ENCODE measurements at regions of chr21 and their contacts with region 1.

Region 1: DNA sequence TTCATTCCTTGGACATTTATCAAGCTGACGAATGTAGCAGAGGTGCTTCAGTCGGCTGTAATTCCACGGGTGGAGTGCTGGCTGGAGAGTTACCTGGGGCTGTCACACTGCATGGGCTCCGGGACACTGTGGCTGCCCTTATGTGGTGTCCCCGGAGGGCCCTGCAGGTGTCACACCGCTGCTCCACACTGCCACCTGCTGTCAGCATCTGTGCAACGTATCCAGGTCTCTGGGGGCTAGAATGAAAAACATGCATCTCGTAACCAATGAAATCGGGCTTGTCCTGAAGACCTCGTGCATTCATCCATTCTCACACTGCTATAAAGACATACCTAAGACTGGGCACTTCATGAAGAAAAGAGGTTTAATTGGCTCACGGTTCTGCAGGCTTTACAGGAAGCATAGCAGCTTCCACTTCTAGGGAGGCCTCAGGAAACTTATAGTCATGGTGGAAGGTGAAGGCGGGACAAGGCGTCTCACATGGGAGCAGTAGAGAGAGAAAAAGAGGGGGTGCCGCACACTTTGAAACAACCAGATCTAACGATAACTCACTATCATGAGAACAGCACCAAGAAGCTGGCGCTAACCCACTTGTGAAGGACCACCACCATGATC is 46.7 kb upstream of the PCBP3 start:
- DNase-seq: peak; percentile 90
- H3K4me3 Mint-ChIP-seq: no peak overlapping the region
- H3K27ac Mint-ChIP-seq: no peak overlapping the region
- H3K4me1 Mint-ChIP-seq: peaks cover 13% of the 10 kb centered on the region
- H3K27me3 Mint-ChIP-seq: peaks cover 4% of the 10 kb centered on the region

Region 2: DNA sequence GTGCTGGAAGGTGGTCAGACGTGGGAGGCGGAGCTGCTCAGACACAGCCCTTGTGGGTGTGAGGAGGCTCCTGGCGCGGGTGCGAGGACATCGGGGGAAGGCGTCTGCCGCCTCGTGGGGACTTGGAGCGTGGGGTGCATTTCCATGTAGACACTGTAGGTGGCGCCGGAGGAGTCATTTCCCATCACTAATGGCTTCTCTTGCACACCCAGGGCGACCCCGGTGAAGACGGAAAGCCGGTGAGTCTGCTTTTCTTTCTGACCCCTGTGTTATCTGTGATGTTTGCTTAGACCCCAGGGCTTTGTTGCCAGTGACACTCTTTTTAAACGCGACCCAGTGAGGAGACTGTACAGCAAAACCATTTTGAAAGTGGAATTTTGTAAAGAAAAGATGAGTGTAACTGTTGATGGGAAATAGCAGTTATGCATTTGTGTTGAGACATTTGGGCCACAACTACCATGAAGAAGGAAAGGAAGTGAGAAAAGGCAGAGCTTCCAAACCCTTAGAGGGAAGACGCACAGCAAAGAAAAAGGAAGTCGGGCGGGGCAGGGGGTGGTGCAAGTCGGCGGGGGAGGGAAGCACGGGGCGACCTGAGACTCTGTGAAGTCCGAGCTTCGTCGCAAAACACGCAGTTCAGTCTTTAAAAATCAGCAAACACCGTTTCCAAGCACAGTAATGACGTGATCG is 118.6 kb before region 1 on chr21:
- CTCF ChIA-PET with region 1: interaction called, 10 read pairs
- DNase-seq: peak; percentile 86
- H3K4me3 Mint-ChIP-seq: peak overlapping the region; percentile 59
- H3K27ac Mint-ChIP-seq: peak overlapping the region; percentile 88
- H3K4me1 Mint-ChIP-seq: peaks cover 41% of the 10 kb centered on the region
- H3K27me3 Mint-ChIP-seq: no peaks in the 10 kb centered on the region

Region 3: GRCh38 chr21:45555551-45556301 is 41.1 kb before region 1 on chr21:
- CTCF ChIA-PET with region 1: interaction called, 16 read pairs
- DNase-seq: peak; percentile 44
- H3K4me3 Mint-ChIP-seq: no peak overlapping the region
- H3K27ac Mint-ChIP-seq: no peak overlapping the region
- H3K4me1 Mint-ChIP-seq: peaks cover 27% of the 10 kb centered on the region
- H3K27me3 Mint-ChIP-seq: peaks cover 42% of the 10 kb centered on the region